ENCODE measurements at regions of chr2 and their contacts with region 1.

Region 1: DNA sequence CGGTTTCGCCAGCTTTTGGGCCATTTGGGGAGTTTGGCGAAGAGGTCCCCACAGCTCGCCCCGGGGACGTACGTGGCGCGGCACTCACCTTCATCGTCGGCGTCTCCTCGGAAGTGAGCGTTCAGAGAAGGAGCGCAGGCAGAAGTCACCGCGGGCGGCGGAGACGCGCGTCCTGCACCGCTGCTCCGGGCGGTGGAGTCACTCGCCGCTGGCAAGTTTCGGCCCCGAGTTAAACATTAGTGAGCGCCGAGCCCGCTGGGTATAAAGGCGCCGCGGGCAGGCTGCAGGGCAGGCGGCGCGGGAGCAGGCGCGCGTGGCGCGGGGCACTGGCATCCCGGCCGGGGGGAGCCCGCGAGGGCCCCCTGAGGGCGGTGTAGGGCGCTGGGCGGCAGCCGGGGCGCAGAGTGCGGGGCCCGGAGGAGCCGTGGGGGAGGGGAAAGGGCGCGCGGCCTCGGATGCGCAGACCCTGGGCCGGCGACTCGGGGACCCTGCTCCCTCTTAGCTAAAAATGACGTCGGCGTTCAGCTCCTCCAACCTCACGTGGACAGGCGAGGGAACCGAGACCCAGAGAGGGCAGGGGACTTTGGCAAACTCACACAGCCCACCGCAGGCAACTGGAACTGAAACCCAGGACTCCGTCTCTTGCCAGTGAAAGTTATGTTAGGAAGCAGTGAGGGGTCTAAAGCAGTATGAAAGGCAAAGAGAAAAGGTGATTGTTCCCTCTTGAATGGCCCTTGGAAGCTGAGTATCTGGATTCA is at the start of gene DPP4:
- DNase-seq: peak; percentile 77
- H3K4me3 ChIP-seq: peak within 1 kb of the TSS; percentile 17 to 67 (median 56)
- H3K27ac ChIP-seq: peak within 1 kb of the TSS; percentile 44 to 61 (median 60)
- H3K4me1 ChIP-seq: peaks cover 4 to 33% (median 12%) of the 10 kb centered on the region in 4 donors
- H3K27me3 ChIP-seq: no peaks in the 10 kb centered on the region
- CTCF ChIP-seq: no peak
- EP300 ChIP-seq: no peak
- POLR2A ChIP-seq: no peak
- total RNA-seq, gene DPP4: 1.6 to 12.7 (median 7.0) TPM

Region 2: DNA sequence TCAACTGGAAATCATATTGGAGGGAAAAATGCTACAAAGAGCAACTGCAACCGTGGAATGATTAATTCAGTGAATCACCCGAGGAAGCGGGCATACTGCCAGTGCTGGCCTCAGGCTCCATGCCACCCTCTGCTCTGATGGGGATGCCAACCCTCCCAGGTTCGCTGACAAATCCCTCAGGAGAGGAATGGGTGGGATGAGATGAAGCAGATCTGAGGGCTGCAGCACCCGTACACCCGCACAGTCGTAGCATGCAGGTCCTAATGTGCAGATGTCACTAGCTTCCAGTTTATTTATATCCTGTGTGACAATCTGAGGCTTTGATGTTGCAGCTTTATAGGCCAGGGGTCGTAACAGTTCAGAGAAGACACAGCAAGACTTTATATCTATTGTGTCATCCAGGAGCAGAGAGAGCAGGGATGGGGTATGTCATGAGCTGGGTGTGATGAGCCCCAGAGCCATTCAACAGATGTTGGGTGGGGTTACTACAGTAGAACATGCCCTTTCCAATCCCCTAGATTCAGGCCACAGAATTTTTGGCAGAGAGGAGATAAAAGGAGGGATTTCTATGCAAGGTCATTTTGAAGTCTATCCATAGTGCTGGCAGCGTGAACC is 44.7 kb before region 1 on chr2:
- in situ Hi-C with region 1: no loop called
- intact Hi-C with region 1: loop called (anchors 10 kb)
- DNase-seq: no peak
- H3K4me3 ChIP-seq: no peak overlapping the region
- H3K27ac ChIP-seq: no peak overlapping the region
- H3K4me1 ChIP-seq: peaks cover 0 to 14% (median 2%) of the 10 kb centered on the region in 4 donors
- H3K27me3 ChIP-seq: no peaks in the 10 kb centered on the region
- CTCF ChIP-seq: no peak
- EP300 ChIP-seq: no peak
- POLR2A ChIP-seq: no peak

Region 3: DNA sequence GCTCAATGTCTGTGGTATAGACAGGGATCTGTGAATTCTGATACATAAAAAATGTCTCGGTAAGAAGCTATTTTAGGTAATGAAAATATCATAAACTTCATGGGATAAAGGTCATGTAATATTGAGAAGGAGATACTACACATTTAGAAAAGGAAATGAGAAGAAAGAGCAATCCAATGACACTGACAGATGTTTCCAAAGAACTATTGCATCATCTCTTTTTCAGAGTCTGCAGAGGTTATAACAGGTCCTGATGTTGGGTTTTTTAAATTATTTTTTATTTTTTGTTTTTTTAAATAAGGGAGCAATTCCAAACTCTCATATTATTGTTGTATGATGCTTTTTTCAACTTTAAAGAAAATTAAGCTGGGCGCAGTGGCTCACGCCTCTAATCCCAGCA is 587.6 kb after region 1 on chr2:
- in situ Hi-C with region 1: no loop called
- intact Hi-C with region 1: no loop called
- DNase-seq: no peak
- H3K4me3 ChIP-seq: no peak overlapping the region
- H3K27ac ChIP-seq: no peak overlapping the region
- H3K4me1 ChIP-seq: no peaks in the 10 kb centered on the region
- H3K27me3 ChIP-seq: no peaks in the 10 kb centered on the region
- CTCF ChIP-seq: no peak
- EP300 ChIP-seq: no peak
- POLR2A ChIP-seq: no peak

Measured in transverse colon (tissue), 4 donors.